ENCODE measurements at regions of chr5 and their contacts with region 1.

Region 1: GRCh38 chr5:59390074-59390659 is 503.4 kb downstream of the PDE4D start:
- DNase-seq: peak in 15 of 42 donors; percentile 10 to 77 (median 34)

Region 2: DNA sequence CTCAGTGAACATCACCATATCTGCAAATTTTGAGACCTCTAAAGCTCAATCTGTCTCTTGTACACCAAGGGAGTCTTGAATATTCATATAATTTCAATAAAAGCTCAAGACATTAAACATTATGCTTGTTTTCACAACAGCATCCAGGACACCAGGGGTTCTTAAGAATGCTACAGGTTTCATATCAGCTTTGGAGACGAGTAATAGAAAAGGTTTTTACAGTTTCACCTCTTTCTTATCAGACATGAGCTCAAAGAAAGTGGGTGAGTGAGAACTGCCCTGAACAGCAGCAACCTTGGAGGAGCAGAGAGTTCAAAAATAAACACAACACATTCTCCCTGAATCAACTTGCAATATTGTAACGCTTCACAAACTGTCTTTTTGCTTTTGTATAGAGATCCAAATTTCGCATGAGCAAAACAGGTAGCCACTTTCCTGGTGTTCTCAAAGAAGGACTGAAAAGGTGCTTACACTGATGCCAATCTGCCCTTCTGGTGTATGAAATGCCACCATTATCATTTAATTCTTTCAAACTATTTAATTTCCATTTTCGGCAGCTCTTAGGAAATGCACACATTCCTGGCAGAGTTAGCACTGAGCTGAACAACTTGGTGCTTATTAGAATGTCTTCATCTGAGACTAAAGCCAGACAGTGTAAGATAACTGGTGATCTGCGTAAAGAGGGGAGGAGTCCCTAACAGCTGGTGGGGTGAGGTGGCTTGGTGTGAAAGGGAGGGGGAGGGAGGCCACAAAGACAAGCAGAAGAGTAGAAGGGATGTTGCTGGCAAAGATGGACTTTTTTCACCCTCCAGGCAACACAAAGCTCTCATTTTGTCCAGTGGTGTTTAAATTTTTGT is 31.9 kb before region 1 on chr5:
- intact Hi-C with region 1: no loop called
- DNase-seq: no peak

Region 3: GRCh38 chr5:59483971-59484472 is 93.9 kb after region 1 on chr5:
- intact Hi-C with region 1: no loop called
- DNase-seq: no peak

Region 4: DNA sequence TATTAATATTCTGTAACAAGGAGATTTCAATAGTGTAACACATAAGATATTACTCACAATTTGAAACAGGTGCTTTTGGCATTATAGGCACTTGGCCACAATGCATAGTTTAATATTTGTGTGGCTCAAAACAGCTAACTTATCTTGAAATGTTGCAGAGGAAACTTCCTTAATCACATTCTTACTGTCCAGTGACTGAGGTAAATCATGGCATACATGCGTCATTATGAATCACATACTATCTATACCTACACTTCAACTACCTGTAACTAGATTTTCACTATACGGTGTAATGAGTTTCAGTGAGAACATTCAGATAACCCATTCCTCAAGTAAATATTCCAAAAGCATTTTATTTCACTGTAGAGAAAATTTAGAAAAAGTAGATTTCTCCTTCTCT is 284.6 kb after region 1 on chr5:
- intact Hi-C with region 1: loop called (anchors 5 kb)
- DNase-seq: no peak